Prostate gland (tissue), 2 donors: ENCODE measurements at regions of chr5 and their contacts with region 1.

Region 1: DNA sequence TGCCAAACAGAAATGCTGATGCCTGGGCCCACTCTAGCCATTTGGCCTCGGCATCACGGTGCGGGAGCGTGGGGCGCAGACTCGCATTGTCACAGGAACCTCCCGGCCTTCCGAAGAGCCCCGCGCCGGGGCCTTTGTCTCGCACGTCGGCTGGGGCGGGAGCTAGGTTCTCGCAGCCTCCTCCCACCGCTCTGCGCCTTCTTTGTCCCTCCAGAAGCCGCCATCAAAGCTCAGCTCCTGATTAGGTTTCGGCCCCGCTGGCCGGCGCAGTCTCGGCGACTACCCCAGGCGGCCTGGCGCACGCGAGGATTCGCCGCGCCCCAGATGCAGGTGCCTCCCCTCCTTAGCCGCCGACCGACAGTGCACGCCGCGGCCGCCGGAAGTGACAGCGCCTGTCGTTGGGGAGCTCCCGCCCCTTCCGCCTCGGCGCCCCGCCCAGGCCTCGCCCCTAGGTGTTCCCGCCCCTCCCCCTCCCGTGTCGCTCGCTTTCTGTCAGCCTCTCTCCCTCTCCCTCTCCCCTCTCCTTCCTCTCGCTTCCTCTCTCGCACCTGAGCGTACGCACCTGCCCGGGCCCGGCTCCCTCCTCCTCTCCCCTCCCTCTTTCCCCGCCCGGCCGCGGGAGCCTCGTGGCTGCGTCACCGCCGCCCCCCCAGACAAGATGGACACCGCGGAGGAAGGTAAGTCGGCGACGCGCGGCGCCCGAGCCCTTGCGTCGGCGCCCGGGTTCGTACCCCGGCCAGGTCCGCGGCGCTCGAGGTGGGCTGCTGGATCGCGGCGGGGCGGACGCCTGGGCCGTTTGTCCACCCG is at the start of gene MARCHF6:
- DNase-seq: peak; percentile 96
- H3K4me3 ChIP-seq: peak within 1 kb of the TSS; percentile 94 to 98
- H3K27ac ChIP-seq: peak within 1 kb of the TSS; percentile 98 to 99
- H3K4me1 ChIP-seq: no peaks in the 10 kb centered on the region
- H3K27me3 ChIP-seq: no peaks in the 10 kb centered on the region
- CTCF ChIP-seq: peak in 2 of 4 experiments; percentile 23 to 44
- POLR2A ChIP-seq: peak; percentile 93
- total RNA-seq, gene MARCHF6: 65.3 to 86.5 TPM

Region 2: GRCh38 chr5:10162468-10162867 is 191.0 kb before region 1 on chr5:
- intact Hi-C with region 1: no loop called
- DNase-seq: no peak
- H3K4me3 ChIP-seq: no peak overlapping the region
- H3K27ac ChIP-seq: no peak overlapping the region
- H3K4me1 ChIP-seq: no peaks in the 10 kb centered on the region
- H3K27me3 ChIP-seq: no peaks in the 10 kb centered on the region
- CTCF ChIP-seq: no peak
- POLR2A ChIP-seq: no peak

Region 3: GRCh38 chr5:10401498-10401897 is 48.1 kb after region 1 on chr5:
- intact Hi-C with region 1: loop called (anchors 5 kb)
- DNase-seq: no peak
- H3K4me3 ChIP-seq: no peak overlapping the region
- H3K27ac ChIP-seq: no peak overlapping the region
- H3K4me1 ChIP-seq: no peaks in the 10 kb centered on the region
- H3K27me3 ChIP-seq: no peaks in the 10 kb centered on the region
- CTCF ChIP-seq: no peak
- POLR2A ChIP-seq: no peak

Region 4: DNA sequence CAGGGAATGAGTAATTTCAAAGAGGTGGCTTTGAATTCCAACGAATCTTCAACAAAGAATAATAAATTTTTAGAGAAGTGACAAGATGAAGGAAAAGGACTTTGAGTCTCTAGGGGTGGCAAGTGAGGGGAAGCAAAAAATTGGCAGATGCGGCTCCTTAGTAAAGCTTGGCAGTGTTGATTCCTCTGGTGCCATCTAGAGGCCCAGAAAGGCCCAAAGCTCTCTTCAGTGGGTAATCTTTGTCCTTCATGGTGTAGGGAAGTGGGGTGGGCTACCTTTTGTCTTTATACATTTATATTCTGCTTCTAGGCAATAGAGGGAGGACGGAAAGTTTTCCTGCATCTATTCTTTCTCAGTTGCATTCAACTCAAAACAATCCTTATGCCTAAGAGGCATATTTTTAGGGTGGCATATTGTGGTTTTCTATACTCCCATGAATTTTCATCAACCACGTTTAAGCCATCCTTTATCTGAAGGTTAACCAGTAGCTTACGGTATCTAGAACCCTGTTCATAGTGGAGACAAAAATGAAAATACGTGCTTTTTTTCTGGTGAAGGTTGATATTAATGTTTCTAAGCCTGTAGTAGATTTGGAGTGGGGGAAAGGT is 70.8 kb after region 1 on chr5:
- intact Hi-C with region 1: loop called (anchors 5 kb)
- DNase-seq: peak; percentile 17
- H3K4me3 ChIP-seq: no peak overlapping the region
- H3K27ac ChIP-seq: no peak overlapping the region
- H3K4me1 ChIP-seq: no peaks in the 10 kb centered on the region
- H3K27me3 ChIP-seq: no peaks in the 10 kb centered on the region
- CTCF ChIP-seq: peak in 3 of 4 experiments; percentile 25 to 33 (median 29)
- POLR2A ChIP-seq: no peak

Region 5: GRCh38 chr5:10627160-10627701 is 273.8 kb after region 1 on chr5:
- intact Hi-C with region 1: loop called (anchors 5 kb)
- DNase-seq: no peak
- H3K4me3 ChIP-seq: peak overlapping the region in 1 of 2 donors; percentile 6
- H3K27ac ChIP-seq: peak overlapping the region; percentile 44 to 59
- H3K4me1 ChIP-seq: peaks cover 9% of the 10 kb centered on the region
- H3K27me3 ChIP-seq: no peaks in the 10 kb centered on the region
- CTCF ChIP-seq: no peak
- POLR2A ChIP-seq: no peak

Region 6: GRCh38 chr5:10671041-10672008 is 317.9 kb after region 1 on chr5:
- intact Hi-C with region 1: no loop called
- DNase-seq: no peak
- H3K4me3 ChIP-seq: no peak overlapping the region
- H3K27ac ChIP-seq: no peak overlapping the region
- H3K4me1 ChIP-seq: no peaks in the 10 kb centered on the region
- H3K27me3 ChIP-seq: no peaks in the 10 kb centered on the region
- CTCF ChIP-seq: no peak
- POLR2A ChIP-seq: no peak

Region 7: GRCh38 chr5:10876006-10876744 is 522.7 kb after region 1 on chr5:
- intact Hi-C with region 1: no loop called
- DNase-seq: no peak
- H3K4me3 ChIP-seq: no peak overlapping the region
- H3K27ac ChIP-seq: no peak overlapping the region
- H3K4me1 ChIP-seq: no peaks in the 10 kb centered on the region
- H3K27me3 ChIP-seq: no peaks in the 10 kb centered on the region
- CTCF ChIP-seq: no peak
- POLR2A ChIP-seq: no peak